Mucosa of descending colon (tissue), 3 donors: ENCODE measurements at regions of chrX and their contacts with region 1.

Region 1: DNA sequence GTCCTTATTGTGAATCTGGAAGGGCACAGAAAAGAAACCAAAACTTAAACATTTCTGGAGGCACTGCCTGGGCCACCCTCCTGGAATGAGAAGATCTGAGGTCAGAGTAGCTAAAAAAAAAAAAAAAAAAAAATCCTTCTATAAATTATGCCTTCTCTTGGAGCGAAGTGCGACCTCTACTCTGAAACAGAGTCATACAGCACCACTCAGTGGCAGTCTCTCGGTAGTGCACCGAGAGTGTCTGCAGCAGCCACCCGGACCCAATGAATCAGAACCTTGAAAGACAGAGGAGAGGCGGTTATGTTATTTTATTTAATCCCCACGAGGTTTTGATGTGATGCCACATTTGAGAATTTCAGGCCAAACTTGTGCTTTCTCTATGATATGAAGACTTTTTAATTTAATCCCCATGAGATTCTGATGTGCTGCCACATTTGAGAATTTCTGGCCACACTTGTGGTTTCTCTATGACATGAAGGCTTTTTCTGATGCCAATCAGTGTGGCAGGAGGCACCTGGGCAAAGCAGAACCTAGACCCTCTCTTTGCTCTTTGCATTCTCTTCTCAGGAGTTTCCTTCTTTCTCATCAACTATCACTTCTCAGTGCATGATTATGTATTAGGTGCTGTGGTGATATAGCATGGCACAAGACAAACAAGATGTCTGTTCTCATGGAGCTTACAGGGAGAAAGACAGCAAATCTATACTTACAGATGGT is 5.6 kb upstream of the CT47C1 start:
- DNase-seq: peak in 2 of 3 donors; percentile 56 to 63
- ATAC-seq: peak; percentile 83
- H3K4me3 ChIP-seq: no peak overlapping the region
- H3K4me1 ChIP-seq: no peaks in the 10 kb centered on the region
- CTCF ChIP-seq: peak; percentile 28

Region 2: DNA sequence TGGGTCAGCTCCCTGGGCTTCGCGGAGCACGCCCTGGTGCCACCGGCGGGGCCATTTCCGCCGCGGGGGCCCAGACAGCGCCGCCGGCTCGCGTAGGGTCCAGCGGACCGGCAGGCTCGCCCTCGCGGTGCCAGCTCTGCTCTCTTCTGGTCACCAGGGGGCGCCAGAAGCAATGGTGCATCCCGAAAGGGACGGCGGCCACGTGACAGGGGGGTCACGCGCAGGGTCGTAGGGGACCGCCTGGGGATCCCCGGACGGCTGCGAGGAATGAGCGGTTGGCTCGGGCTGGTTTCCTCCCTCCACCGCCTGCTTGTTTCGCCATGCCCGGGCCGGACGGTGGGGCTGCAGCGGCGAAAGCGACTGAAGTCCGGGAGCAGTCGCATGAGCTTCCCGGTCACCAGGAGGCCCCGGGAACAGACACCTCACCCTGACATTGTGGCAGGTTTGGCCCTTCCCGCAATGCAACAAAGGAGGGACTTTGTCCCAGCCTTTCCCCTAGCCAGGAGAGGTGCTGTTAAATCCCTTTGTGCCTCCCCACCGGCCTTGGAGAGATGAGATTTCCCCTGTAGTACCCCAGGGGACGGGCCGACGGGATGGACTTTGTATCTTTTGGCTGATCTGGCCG is 227.7 kb before region 1 on chrX:
- intact Hi-C with region 1: loop called in 1 of 2 experiments (anchors 5 kb)
- DNase-seq: peak; percentile 74 to 84 (median 83)
- ATAC-seq: peak; percentile 95
- H3K4me3 ChIP-seq: no peak overlapping the region
- H3K4me1 ChIP-seq: no peaks in the 10 kb centered on the region
- CTCF ChIP-seq: peak; percentile 65

Region 3: GRCh38 chrX:119130911-119131310 is 63.7 kb after region 1 on chrX:
- intact Hi-C with region 1: no loop called
- DNase-seq: no peak
- ATAC-seq: no peak
- H3K4me3 ChIP-seq: no peak overlapping the region
- H3K4me1 ChIP-seq: no peaks in the 10 kb centered on the region
- CTCF ChIP-seq: no peak

Region 4: DNA sequence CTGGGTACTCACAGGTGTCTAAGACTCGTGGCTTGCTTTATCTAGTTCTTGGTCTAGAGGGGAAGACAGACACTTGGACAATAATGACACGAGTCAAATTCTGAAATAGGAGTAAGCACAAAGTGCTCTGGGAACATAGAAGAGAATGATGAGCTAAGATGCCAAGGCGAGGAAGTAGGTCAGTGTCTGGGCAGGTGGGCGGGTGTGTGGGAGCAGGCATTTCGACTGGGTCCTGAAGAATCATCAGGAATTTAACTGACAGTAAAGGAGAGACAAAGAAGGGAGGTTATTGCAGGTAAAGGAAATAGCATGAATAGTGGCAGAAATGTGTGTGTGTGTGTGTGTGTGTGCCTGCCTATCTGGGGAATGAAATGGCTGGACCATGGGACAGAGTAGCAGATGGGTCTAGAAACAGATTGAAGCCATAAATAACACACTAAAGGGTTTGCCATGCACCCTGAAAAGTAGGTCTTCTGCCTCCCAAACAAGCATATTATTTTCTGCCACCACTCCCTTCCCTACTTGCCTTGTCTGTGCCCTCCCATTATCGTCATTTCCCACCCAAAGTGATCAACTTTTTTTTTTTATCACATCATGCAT is 273.5 kb after region 1 on chrX:
- intact Hi-C with region 1: no loop called
- DNase-seq: no peak
- ATAC-seq: no peak
- H3K4me3 ChIP-seq: no peak overlapping the region
- H3K4me1 ChIP-seq: no peaks in the 10 kb centered on the region
- CTCF ChIP-seq: no peak

Region 5: DNA sequence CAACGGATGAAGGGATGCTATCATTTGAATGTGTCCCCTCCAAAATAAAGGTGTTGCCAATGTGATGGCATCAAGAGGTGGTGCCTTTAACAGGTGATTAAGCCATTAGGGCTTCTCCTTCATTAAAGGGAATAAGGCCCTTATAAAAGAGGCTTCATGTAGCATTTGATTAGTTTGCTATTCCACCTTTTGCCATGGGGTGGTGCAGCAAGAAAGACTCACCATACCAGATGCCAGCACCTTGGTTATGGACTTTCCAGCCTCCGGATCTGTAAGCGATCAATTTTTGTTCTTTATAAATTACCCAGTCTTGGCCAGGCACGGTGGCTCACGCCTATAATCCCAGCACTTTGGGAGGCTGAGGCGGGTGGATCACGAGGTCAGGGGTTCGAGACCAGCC is 324.1 kb after region 1 on chrX:
- intact Hi-C with region 1: no loop called
- DNase-seq: peak in 1 of 3 donors; percentile 68
- ATAC-seq: peak; percentile 61
- H3K4me3 ChIP-seq: no peak overlapping the region
- H3K4me1 ChIP-seq: peaks cover 2% of the 10 kb centered on the region
- CTCF ChIP-seq: no peak

Region 6: GRCh38 chrX:119402588-119402987 is 335.4 kb after region 1 on chrX:
- intact Hi-C with region 1: no loop called
- DNase-seq: no peak
- ATAC-seq: no peak
- H3K4me3 ChIP-seq: no peak overlapping the region
- H3K4me1 ChIP-seq: peaks cover 4% of the 10 kb centered on the region
- CTCF ChIP-seq: no peak